ENCODE measurements at regions of chr19 and their contacts with region 1.

Region 1: GRCh38 chr19:12139885-12140547 is at the start of gene ZNF20:
- DNase-seq: peak; percentile 97
- ATAC-seq: peak; percentile 98 to 99 (median 98)
- H3K4me3 ChIP-seq: peak within 1 kb of the TSS; percentile 82 to 94 (median 87)
- H3K27ac ChIP-seq: peak within 1 kb of the TSS; percentile 53 to 68 (median 60)
- H3K4me1 ChIP-seq: peaks cover 0 to 6% (median 1%) of the 10 kb centered on the region in 4 donors
- H3K27me3 ChIP-seq: no peaks in the 10 kb centered on the region
- CTCF ChIP-seq: no peak
- POLR2A ChIP-seq: peak; percentile 24
- total RNA-seq, gene ZNF20: 0.98 to 2.7 (median 1.5) TPM

Region 2: DNA sequence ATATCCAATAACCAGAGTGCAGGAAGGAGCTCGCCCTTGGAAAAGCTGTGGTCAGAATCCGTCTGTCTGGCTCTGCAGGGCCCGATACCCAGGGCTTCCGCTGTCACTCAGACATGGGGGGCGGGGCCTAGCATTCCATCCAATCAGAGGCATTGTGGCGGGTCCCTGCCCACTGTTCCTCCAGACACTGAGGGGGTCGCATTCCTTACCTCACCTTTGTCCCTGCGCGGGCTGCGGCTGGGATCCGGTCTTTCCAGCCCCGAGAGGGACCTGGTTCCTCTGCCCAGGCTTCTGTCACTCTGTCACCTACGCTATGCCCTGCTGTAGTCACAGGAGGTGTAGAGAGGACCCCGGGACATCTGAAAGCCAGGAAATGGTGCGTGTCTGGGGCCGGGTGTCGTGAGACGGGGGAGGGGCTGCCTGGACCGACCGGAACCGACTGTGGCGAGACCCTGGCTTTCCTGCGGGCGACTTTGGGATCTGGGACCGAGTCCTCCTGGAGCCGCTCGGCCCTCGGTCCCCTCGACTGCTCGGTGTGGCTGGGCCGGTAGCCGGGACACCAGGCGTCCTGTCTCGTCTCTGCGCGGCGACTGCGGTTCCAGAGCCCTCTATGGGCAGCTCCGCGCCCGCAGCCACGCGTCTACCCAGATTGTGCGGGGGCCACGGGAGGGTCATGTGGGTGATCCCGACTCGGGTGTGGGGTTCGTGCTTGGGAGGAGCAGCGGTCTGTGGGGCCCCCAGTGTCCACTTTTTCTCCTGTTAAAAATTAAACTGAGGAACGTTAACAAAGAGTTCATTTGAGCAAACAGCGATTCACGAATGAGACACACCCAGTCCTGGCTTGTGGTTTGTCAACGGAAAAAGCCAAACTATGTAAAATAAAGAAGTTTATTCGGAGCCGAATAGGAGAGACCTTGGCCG is 252.1 kb before region 1 on chr19 and contains the start of gene ZNF69:
- intact Hi-C with region 1: loop called in 1 of 2 experiments (anchors 10 kb)
- DNase-seq: peak; percentile 92 to 95 (median 93)
- ATAC-seq: peak; percentile 98 to 99 (median 99)
- H3K4me3 ChIP-seq: peak within 1 kb of the TSS; percentile 61 to 82 (median 73)
- H3K27ac ChIP-seq: peak within 1 kb of the TSS; percentile 63 to 91 (median 87)
- H3K4me1 ChIP-seq: no peaks in the 10 kb centered on the region
- H3K27me3 ChIP-seq: no peaks in the 10 kb centered on the region
- CTCF ChIP-seq: peak in 2 of 4 donors; percentile 18 to 23
- POLR2A ChIP-seq: peak; percentile 66
- total RNA-seq, gene ZNF69: 6.1 to 10.0 (median 9.2) TPM

Region 3: DNA sequence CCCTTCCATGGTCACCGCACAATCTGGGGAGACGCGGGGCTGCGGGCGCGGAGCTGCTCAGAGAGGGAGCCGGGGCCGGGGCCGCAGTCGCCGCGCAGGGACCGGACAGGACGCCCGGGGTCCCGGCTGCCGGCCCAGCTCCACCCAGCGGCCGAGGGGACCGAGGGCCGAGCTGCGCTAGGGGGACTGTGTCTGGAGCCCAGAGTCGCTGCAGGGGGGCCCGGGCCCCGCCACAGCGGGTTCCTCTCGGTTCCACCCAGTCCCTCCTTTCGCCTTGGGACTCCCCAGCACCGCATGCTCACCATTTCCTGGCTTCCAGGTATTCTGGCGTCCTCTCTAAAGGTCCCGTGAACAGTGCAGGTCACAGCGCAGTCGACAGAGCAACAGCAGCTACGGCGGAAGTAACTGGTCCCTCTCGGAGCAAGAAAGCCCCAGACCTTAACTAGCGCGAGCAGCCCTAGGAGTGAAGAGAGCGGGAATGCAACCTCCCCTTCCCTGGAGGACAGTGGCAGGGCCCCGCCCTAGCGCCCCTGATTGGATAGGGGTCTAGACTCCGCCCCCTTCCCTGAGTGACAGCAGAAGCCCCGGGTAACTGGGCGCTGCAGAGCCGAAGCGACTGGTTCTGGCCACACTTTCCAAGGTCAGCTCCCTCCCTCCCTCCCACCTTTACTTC is 87.4 kb before region 1 on chr19 and contains the start of gene ZNF878:
- intact Hi-C with region 1: loop called in 1 of 2 experiments (anchors 10 kb)
- DNase-seq: peak; percentile 83 to 94 (median 93)
- ATAC-seq: peak; percentile 100
- H3K4me3 ChIP-seq: peak within 1 kb of the TSS; percentile 56 to 64 (median 61)
- H3K27ac ChIP-seq: peak within 1 kb of the TSS in 2 of 3 donors; percentile 48 to 63
- H3K4me1 ChIP-seq: peaks cover 0 to 8% (median 3%) of the 10 kb centered on the region in 4 donors
- H3K27me3 ChIP-seq: no peaks in the 10 kb centered on the region
- CTCF ChIP-seq: no peak
- POLR2A ChIP-seq: peak; percentile 95
- total RNA-seq, gene ZNF878: 0.29 to 0.32 (median 0.31) TPM in 4 of 6 experiments, not detected in the others

Region 4: DNA sequence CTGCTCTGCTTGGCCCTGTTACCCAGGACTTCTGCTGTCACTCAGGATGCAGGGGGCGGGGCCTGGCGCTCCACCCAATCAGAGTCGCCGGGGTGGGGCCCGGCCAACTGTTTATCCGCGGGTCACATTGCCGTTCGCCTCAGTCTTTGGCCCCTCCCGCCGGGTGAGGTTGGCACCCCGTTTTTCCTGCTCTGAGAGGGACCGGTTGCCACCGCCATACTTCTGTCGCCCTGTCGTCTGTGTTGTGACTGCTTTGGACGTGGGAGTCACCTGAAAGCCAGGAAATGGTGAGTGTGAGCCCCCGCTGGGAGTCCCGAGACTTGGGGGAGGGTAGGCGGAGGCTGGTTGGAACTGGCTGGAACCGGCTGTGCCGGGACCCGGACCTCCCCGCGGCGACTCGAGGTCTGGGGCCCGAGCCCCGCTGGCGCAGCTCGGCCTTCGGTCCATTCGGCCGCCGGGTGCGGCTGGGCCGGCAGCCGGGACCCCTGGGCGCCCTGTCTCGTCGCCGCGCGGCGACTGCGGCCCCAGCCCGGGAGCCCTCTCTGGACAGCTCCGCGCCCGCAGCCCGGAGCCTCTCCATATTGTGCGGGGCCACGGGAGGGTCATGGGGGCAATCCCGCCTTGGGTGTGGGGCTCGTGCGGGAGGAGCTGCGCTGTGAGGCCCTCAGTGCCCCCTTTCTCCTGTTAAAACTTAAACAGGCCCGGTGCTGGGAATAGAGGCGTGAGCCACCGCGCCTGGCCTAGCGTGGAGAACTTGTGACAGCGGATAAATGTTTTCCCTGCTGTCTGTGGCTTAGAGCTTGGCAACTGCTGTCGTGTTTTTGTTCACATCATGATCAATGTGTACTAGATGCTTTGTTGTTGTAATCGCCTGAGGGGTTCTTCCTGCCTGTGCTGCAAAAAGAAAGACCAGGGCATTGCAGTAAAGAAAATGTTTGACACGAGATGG is 75.2 kb before region 1 on chr19 and contains the start of gene ZNF844:
- intact Hi-C with region 1: loop called in 1 of 2 experiments (anchors 5 kb)
- DNase-seq: peak; percentile 96 to 98 (median 97)
- ATAC-seq: peak; percentile 97 to 98 (median 98)
- H3K4me3 ChIP-seq: peak within 1 kb of the TSS; percentile 62 to 72 (median 68)
- H3K27ac ChIP-seq: peak within 1 kb of the TSS; percentile 77 to 96 (median 91)
- H3K4me1 ChIP-seq: peaks cover 0 to 12% (median 2%) of the 10 kb centered on the region in 4 donors
- H3K27me3 ChIP-seq: no peaks in the 10 kb centered on the region
- CTCF ChIP-seq: no peak
- POLR2A ChIP-seq: peak; percentile 96
- total RNA-seq, gene ZNF844: 2.2 to 8.6 (median 3.1) TPM

Measured in right lobe of liver (tissue), 6 donors.